Common myeloid progenitor, CD34-positive (primary cell): ENCODE measurements at regions of chr15 and their contacts with region 1.

Region 1: GRCh38 chr15:73972984-73973682 is 19.0 kb downstream of the STOML1 start:
- DNase-seq: peak; percentile 78 to 89 (median 85)
- H3K4me3 ChIP-seq: peak overlapping the region in 5 of 7 experiments; percentile 19 to 64 (median 43)
- H3K27ac ChIP-seq: no peak overlapping the region
- H3K4me1 ChIP-seq: peaks cover 3 to 37% (median 30%) of the 10 kb centered on the region in 4 experiments
- H3K27me3 ChIP-seq: no peaks in the 10 kb centered on the region

Region 2: DNA sequence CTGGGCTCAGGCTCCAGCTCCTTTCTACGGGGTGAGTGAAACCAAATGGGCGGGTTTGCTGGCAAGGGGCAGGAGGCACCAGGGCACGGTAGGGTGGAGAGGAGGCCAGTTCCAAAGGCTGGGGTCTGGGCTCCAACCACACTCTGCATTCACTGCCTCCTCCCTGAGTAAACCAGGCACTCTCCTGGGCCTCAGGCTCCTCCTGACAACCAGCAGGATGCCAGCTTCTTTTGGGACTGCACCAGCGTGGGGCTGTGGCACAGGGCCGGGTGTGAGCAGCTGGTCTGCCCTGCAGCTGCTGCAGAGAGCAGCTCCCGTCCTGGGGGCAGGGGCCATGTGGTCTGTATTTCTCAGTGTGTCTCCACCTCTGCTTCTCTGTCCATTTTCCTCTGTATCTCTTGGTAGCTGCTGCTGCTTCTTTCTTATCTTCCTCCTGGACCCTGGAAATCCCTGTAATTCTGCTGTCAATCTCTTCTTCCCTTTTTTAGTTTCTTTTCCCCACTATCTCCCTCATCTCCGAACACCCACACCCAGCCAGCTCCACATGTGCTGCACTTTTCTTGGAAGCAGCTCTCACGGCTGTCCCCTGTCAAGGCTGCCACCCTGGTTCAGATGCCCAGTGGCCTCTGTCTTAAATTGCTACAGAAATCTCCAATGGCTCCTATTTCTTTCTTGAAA is 154.7 kb before region 1 on chr15:
- CTCF ChIA-PET with region 1: no interaction called
- POLR2A ChIA-PET with region 1: no interaction called
- DNase-seq: no peak
- H3K4me3 ChIP-seq: no peak overlapping the region
- H3K27ac ChIP-seq: no peak overlapping the region
- H3K4me1 ChIP-seq: peaks cover 0 to 1% (median 0%) of the 10 kb centered on the region in 4 experiments
- H3K27me3 ChIP-seq: peaks cover 0 to 2% (median 0%) of the 10 kb centered on the region in 5 experiments

Region 3: GRCh38 chr15:73918749-73919148 is 54.4 kb before region 1 on chr15:
- CTCF ChIA-PET with region 1: no interaction called
- POLR2A ChIA-PET with region 1: no interaction called
- DNase-seq: no peak
- H3K4me3 ChIP-seq: no peak overlapping the region
- H3K27ac ChIP-seq: no peak overlapping the region
- H3K4me1 ChIP-seq: peaks cover 2 to 52% (median 50%) of the 10 kb centered on the region in 4 experiments
- H3K27me3 ChIP-seq: no peaks in the 10 kb centered on the region

Region 4: GRCh38 chr15:73950831-73951561 is 22.1 kb before region 1 on chr15:
- CTCF ChIA-PET with region 1: interaction called, 20 read pairs
- POLR2A ChIA-PET with region 1: no interaction called
- DNase-seq: peak; percentile 85 to 94 (median 91)
- H3K4me3 ChIP-seq: no peak overlapping the region
- H3K27ac ChIP-seq: peak overlapping the region; percentile 25 to 30
- H3K4me1 ChIP-seq: peaks cover 1 to 64% (median 59%) of the 10 kb centered on the region in 4 experiments
- H3K27me3 ChIP-seq: no peaks in the 10 kb centered on the region

Region 5: GRCh38 chr15:73991726-73992593 is 18.8 kb after region 1 on chr15 and contains the start of gene STOML1:
- CTCF ChIA-PET with region 1: interaction called, 96 read pairs
- POLR2A ChIA-PET with region 1: interaction called, 3 read pairs
- DNase-seq: peak; percentile 94 to 97 (median 97)
- H3K4me3 ChIP-seq: peak within 1 kb of the TSS; percentile 32 to 85 (median 75)
- H3K27ac ChIP-seq: peak within 1 kb of the TSS in 1 of 2 experiments; percentile 77
- H3K4me1 ChIP-seq: peaks cover 17 to 75% (median 64%) of the 10 kb centered on the region in 4 experiments
- H3K27me3 ChIP-seq: no peaks in the 10 kb centered on the region

Region 6: DNA sequence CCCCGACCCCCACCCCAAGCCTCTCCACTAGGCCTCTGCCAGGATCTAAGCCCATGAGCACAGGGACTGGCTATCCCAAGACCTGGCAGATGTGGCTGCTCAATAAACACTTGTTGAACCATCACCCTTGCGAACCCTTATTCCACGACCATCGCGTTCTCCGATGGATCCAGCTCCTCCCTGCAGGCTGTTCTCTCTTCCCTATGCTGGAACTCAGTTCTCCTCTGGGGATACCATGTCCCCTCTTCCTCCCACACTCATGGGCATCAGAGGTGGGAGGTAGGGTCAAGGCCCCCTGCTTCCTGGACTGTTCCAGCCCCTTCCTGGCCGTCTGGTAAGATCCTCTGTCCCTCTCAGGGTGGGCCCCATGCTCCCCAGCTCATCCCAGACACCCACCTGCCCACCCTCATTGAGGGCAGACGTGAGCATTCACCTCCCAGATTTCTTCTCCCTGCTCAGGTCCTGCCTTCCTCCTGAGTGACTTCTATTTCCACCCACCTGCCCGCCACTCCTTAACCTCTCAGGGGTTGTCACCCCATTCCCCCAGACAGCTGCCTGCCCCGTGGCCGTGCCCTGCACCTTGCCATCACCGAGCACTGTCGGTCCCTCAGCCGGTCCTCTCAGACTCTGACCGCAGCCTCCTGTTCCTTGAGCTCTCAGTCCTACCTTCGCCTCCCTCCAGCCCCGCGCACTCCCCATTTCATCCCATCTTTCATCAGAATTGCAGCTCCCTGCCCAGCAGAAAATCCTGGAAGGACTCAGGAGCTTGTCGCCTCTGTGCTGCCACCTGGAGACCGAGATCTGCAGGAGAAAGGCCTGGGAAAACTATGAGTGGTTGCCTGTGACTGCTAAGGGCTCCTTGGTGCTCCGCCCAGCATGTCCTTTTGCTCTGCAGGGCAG is 63.4 kb after region 1 on chr15:
- CTCF ChIA-PET with region 1: interaction called, 59 read pairs
- POLR2A ChIA-PET with region 1: no interaction called
- DNase-seq: peak in 1 of 3 donors; percentile 17
- H3K4me3 ChIP-seq: no peak overlapping the region
- H3K27ac ChIP-seq: no peak overlapping the region
- H3K4me1 ChIP-seq: peaks cover 0 to 34% (median 15%) of the 10 kb centered on the region in 4 experiments
- H3K27me3 ChIP-seq: no peaks in the 10 kb centered on the region

Region 7: DNA sequence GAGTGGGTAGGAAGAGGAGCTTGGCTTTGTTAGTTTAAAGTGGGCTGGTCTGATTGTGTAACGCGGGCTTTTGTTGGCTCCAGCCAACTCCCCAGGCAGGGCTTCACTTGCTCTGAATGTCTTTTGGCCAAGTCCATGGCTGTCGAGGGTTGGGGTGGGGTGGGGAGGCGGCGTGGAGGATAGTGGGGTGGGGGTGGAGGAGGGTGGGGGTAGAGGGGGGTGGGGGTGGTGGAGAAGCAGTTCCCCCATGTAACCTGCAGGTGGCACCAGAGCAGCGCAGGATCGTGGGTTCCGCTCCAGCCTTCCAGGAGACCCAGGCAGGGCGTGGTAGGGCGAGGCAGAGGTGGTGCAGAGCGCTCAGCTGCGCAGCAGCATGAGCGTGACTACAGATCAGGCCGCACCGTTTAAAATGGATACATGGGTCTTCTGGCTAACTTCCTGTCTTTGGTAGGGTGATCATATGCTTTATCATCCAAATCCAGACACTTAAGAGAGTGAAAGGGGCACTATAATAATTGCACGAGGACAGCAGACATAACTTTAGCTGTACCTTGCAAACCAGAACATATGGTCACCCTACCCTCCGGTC is 80.9 kb after region 1 on chr15:
- CTCF ChIA-PET with region 1: interaction called, 49 read pairs
- POLR2A ChIA-PET with region 1: no interaction called
- DNase-seq: peak; percentile 67 to 81 (median 81)
- H3K4me3 ChIP-seq: peak overlapping the region in 3 of 7 experiments; percentile 19 to 62 (median 36)
- H3K27ac ChIP-seq: no peak overlapping the region
- H3K4me1 ChIP-seq: peaks cover 0 to 33% (median 16%) of the 10 kb centered on the region in 4 experiments
- H3K27me3 ChIP-seq: no peaks in the 10 kb centered on the region

Region 8: DNA sequence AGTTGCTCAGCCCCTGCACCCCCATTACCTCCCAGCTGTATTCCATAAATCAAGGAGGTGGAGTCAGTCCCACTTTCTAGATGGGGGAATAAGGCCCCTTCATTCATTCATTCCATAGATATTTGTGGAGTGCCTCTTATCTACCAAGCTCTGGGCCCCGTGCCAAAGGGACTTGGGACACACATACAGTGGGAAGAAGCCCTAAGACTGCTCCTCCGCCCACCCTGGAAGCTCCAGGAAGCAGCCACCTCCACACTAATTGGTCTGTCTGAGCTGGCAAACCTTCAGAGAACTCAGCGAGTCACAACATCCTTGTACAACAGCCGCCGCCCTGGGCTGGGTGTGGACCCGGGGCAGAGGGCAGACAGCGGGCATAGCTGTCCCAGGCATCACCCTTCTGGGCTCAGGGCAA is 223.1 kb after region 1 on chr15:
- CTCF ChIA-PET with region 1: no interaction called
- POLR2A ChIA-PET with region 1: no interaction called
- DNase-seq: no peak
- H3K4me3 ChIP-seq: no peak overlapping the region
- H3K27ac ChIP-seq: no peak overlapping the region
- H3K4me1 ChIP-seq: peaks cover 0 to 28% (median 3%) of the 10 kb centered on the region in 4 experiments
- H3K27me3 ChIP-seq: no peaks in the 10 kb centered on the region

Region 9: GRCh38 chr15:74265046-74265639 is 292.0 kb after region 1 on chr15:
- CTCF ChIA-PET with region 1: no interaction called
- POLR2A ChIA-PET with region 1: no interaction called
- DNase-seq: peak; percentile 30 to 66 (median 54)
- H3K4me3 ChIP-seq: no peak overlapping the region
- H3K27ac ChIP-seq: no peak overlapping the region
- H3K4me1 ChIP-seq: peaks cover 0 to 2% (median 0%) of the 10 kb centered on the region in 4 experiments
- H3K27me3 ChIP-seq: peaks cover 0 to 25% (median 2%) of the 10 kb centered on the region in 5 experiments